Endothelial cell of umbilical vein (primary cell): ENCODE measurements at regions of chr12 and their contacts with region 1.

Region 1: GRCh38 chr12:70449074-70449761 is 83.1 kb downstream of the KCNMB4 start:
- DNase-seq: no peak
- H3K4me3 ChIP-seq: no peak overlapping the region
- H3K27ac ChIP-seq: no peak overlapping the region
- H3K4me1 ChIP-seq: peaks cover 5% of the 10 kb centered on the region
- H3K27me3 ChIP-seq: no peaks in the 10 kb centered on the region
- CTCF ChIP-seq: no peak
- POLR2A ChIP-seq: no peak

Region 2: GRCh38 chr12:70415987-70416386 is 33.2 kb before region 1 on chr12:
- CTCF ChIA-PET with region 1: no interaction called
- POLR2A ChIA-PET with region 1: no interaction called
- dilution Hi-C with region 1: no loop called
- intact Hi-C with region 1: no loop called
- DNase-seq: no peak
- H3K4me3 ChIP-seq: no peak overlapping the region
- H3K27ac ChIP-seq: no peak overlapping the region
- H3K4me1 ChIP-seq: no peaks in the 10 kb centered on the region
- H3K27me3 ChIP-seq: peaks cover 0 to 7% of the 10 kb centered on the region in 2 experiments
- CTCF ChIP-seq: no peak
- POLR2A ChIP-seq: no peak

Region 3: DNA sequence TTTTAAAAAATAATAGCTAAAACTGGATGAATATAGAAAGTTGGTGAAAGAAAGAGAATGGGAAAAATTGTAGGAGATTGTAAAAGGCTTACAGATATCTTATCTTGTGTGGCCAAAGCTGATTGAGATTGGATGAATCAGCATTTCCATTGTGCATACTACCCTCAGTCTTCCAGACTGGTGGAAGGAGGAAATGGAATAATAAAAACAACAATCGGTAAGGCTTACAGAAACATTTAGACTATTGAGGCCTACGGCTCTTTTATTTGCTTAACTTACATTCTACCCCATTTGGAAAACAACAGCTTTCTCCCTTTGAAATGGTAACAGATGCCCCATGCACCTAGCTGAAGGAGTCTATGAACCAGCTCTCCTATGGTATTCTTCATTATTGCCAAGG is 58.2 kb after region 1 on chr12:
- CTCF ChIA-PET with region 1: no interaction called
- POLR2A ChIA-PET with region 1: no interaction called
- dilution Hi-C with region 1: no loop called
- intact Hi-C with region 1: loop called (anchors 5 kb)
- DNase-seq: peak; percentile 94
- H3K4me3 ChIP-seq: no peak overlapping the region
- H3K27ac ChIP-seq: peak overlapping the region; percentile 83
- H3K4me1 ChIP-seq: peaks cover 20% of the 10 kb centered on the region
- H3K27me3 ChIP-seq: no peaks in the 10 kb centered on the region
- CTCF ChIP-seq: no peak
- POLR2A ChIP-seq: peak; percentile 55

Region 4: DNA sequence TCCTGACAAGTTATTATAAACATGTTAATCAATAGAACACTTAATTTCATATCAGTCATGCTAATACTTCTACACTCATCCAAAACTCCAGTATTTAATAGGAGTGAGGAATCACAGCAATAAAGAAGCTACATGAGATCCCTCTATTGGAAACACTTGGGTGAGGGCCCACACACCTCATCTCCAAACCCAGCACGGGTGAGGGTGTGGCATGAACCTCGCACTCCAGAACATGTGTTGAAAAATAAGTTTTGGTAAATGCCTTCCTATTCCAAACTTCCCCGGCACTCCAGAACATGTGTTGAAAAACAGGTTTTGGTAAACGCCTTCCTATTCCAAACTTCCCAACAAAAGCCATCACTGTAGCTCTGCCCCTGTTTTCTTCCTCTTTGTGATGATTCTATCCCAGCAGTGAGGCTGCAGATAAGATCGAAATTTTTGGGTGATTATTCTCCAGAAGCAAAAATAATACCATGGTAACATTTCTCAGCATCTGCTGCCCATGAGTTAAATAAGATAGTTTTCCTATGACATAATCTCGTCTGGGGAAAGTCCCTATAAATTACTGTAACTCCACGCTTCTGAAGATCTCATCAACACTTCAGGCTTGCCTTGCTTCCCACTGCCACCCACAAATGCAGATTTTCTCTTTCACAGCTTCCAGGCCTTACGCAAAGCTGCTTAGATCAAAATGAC is 212.4 kb after region 1 on chr12:
- CTCF ChIA-PET with region 1: no interaction called
- POLR2A ChIA-PET with region 1: no interaction called
- dilution Hi-C with region 1: no loop called
- intact Hi-C with region 1: no loop called
- DNase-seq: peak; percentile 86
- H3K4me3 ChIP-seq: no peak overlapping the region
- H3K27ac ChIP-seq: peak overlapping the region; percentile 97
- H3K4me1 ChIP-seq: peaks cover 40% of the 10 kb centered on the region
- H3K27me3 ChIP-seq: no peaks in the 10 kb centered on the region
- CTCF ChIP-seq: no peak
- POLR2A ChIP-seq: no peak